ENCODE measurements at regions of chr10 and their contacts with region 1.

Region 1: GRCh38 chr10:50275650-50276235 is 24.4 kb upstream of the ASAH2 start:
- DNase-seq: peak; percentile 18 to 34
- ATAC-seq: peak; percentile 74 to 87; a peak in 5 of 6 replicates
- H3K4me3 ChIP-seq: no peak overlapping the region
- H3K27ac ChIP-seq: no peak overlapping the region
- H3K4me1 ChIP-seq: peaks cover 8% of the 10 kb centered on the region
- CTCF ChIP-seq: peak; percentile 52
- EP300 ChIP-seq: no peak
- POLR2A ChIP-seq: no peak
- RAD21 ChIP-seq: peak; percentile 48 to 56; a peak in 4 of 5 replicates

Region 2: DNA sequence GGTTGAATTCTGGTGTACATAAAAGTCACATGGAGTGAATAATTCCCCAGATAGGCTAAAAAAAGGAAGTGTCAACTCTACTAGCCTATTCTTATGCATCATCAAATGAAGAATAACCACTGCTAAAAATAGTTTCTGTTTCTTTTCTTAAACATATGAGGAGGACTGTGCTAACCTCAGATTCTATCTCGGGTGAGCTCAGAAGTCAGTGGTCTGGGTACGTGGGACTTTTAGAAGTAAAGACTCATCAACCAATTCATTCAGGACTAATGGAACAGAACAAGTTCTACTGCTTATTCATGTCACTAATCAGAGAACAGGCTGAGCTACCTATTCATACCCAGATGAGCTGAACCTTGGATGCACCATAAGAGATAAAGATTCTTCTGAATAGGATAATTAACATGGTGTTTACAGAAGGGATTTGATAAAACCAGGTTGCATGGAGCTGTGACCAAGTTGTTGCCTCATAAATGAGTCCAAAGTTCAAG is 14.9 kb before region 1 on chr10:
- CTCF ChIA-PET with region 1: interaction called, 11 read pairs
- POLR2A ChIA-PET with region 1: no interaction called
- DNase-seq: no peak
- ATAC-seq: no peak
- H3K4me3 ChIP-seq: no peak overlapping the region
- H3K27ac ChIP-seq: no peak overlapping the region
- H3K4me1 ChIP-seq: no peaks in the 10 kb centered on the region
- CTCF ChIP-seq: no peak
- EP300 ChIP-seq: no peak
- POLR2A ChIP-seq: no peak
- RAD21 ChIP-seq: no peak

Region 3: DNA sequence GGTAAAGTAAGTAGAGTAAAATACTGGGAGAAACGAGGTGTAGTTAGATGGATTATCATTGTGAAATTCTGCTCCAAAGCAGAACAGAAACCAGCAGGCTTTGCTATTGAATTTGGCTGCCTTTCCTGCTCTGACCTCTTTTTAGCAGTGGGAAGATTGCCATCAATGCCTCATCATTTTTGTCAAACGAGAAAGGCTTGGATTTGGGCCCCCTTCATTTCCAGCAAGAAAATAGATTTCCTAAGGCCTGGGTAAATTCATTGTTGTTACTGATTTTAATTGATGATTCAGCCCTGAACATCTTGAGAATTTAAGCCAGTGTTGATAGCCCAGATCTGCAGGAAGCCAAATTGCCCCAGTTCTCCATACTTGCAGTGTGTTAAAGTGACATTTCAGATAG is 10.8 kb after region 1 on chr10:
- CTCF ChIA-PET with region 1: interaction called, 10 read pairs
- POLR2A ChIA-PET with region 1: no interaction called
- DNase-seq: no peak
- ATAC-seq: no peak
- H3K4me3 ChIP-seq: no peak overlapping the region
- H3K27ac ChIP-seq: no peak overlapping the region
- H3K4me1 ChIP-seq: no peaks in the 10 kb centered on the region
- CTCF ChIP-seq: no peak
- EP300 ChIP-seq: no peak
- POLR2A ChIP-seq: no peak
- RAD21 ChIP-seq: no peak

Region 4: GRCh38 chr10:50336140-50336539 is 60.4 kb after region 1 on chr10:
- CTCF ChIA-PET with region 1: no interaction called
- POLR2A ChIA-PET with region 1: no interaction called
- DNase-seq: no peak
- ATAC-seq: no peak
- H3K4me3 ChIP-seq: no peak overlapping the region
- H3K27ac ChIP-seq: no peak overlapping the region
- H3K4me1 ChIP-seq: 0 out of 3 replicates have a peak, but pooled peaks cover 5% of the 10 kb centered on the region
- CTCF ChIP-seq: no peak
- EP300 ChIP-seq: no peak
- POLR2A ChIP-seq: no peak
- RAD21 ChIP-seq: no peak

Measured in A549 (cell line).